ENCODE measurements at regions of chr1 and their contacts with region 1.

Region 1: GRCh38 chr1:100459358-100460114 is 78.4 kb upstream of the GPR88 start:
- DNase-seq: peak; percentile 39
- ATAC-seq: peak; percentile 86
- H3K4me3 Mint-ChIP-seq: no peak overlapping the region
- H3K27ac Mint-ChIP-seq: no peak overlapping the region
- H3K4me1 Mint-ChIP-seq: peaks cover 25% of the 10 kb centered on the region
- H3K27me3 Mint-ChIP-seq: no peaks in the 10 kb centered on the region
- CTCF ChIP-seq: no peak

Region 2: DNA sequence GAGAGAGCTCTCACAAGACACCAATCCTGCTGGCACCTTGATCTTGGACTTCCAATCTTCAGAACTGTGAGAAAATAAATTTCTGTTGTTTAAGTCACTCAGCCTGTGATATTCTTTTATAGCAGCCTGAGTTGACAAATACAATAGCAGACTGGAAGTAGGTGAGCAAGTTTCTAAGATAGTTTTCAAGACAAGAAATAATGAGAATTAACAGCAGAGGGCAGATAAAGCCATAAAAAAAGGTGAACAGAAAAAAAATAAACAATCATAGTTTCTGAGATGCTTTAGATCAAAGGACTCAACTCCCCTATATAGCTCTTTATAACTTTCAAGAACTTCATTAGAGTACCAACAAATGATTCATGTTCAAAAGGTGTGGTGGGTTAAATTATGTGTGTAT is 1574.7 kb before region 1 on chr1:
- CTCF ChIA-PET with region 1: no interaction called
- POLR2A ChIA-PET with region 1: no interaction called
- intact Hi-C with region 1: no loop called
- DNase-seq: no peak
- ATAC-seq: no peak
- H3K4me3 Mint-ChIP-seq: no peak overlapping the region
- H3K27ac Mint-ChIP-seq: no peak overlapping the region
- H3K4me1 Mint-ChIP-seq: no peaks in the 10 kb centered on the region
- H3K27me3 Mint-ChIP-seq: peaks cover 2% of the 10 kb centered on the region
- CTCF ChIP-seq: no peak

Region 3: DNA sequence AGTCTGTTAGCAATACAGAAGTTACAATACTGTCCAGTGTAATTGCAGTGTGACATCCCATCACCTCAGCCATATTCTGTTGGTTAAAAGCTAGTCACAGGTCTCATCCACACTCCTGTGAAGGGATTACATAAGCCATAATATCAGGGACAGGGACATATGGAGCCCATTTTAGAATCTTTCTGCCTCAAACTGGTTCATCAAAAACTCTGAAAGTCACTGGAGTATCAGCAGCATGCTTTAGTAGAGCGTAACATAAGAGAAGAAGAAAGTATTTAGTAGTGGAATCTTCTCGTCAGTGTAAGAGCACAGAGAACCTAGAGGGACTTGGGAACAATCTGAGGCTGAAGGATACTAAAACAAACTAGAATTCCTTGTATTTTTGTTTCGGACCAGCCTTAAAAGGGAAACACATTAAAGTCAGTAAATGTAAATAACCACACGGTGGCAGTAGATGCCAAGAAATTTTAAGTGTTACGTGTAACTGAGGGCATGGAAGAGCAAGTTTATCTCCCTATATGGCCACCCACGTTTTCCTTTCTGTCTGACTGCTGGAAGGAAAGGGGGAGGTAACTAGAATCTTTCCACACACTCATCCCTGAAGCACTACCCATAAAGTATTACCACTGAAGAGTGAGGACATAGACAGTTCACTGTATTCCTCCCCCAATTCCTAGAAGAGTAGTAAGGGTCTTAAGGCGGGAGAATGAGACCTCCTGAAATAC is 651.0 kb before region 1 on chr1:
- CTCF ChIA-PET with region 1: interaction called, 17 read pairs
- POLR2A ChIA-PET with region 1: no interaction called
- intact Hi-C with region 1: loop called (anchors 1 kb)
- DNase-seq: no peak
- ATAC-seq: peak; percentile 71
- H3K4me3 Mint-ChIP-seq: no peak overlapping the region
- H3K27ac Mint-ChIP-seq: no peak overlapping the region
- H3K4me1 Mint-ChIP-seq: peaks cover 4% of the 10 kb centered on the region
- H3K27me3 Mint-ChIP-seq: peaks cover 10% of the 10 kb centered on the region
- CTCF ChIP-seq: peak; percentile 52

Region 4: GRCh38 chr1:100132566-100133477 is 326.7 kb before region 1 on chr1 and contains the starts of genes SASS6 and TRMT13:
- CTCF ChIA-PET with region 1: interaction called, 4 read pairs
- POLR2A ChIA-PET with region 1: no interaction called
- intact Hi-C with region 1: loop called (anchors 1 kb)
- DNase-seq: peak; percentile 81
- ATAC-seq: peak; percentile 99
- H3K4me3 Mint-ChIP-seq: peak within 1 kb of the TSS; percentile 99
- H3K27ac Mint-ChIP-seq: peak within 1 kb of the TSS; percentile 94
- H3K4me1 Mint-ChIP-seq: peaks cover 35% of the 10 kb centered on the region
- H3K27me3 Mint-ChIP-seq: no peaks in the 10 kb centered on the region
- CTCF ChIP-seq: no peak
- total RNA-seq, gene SASS6: 5.5 and 5.9 TPM in 2 replicates
- total RNA-seq, gene TRMT13: 27.2 and 31.4 TPM in 2 replicates

Region 5: GRCh38 chr1:100277866-100278265 is 181.7 kb before region 1 on chr1:
- CTCF ChIA-PET with region 1: interaction called, 10 read pairs
- POLR2A ChIA-PET with region 1: no interaction called
- intact Hi-C with region 1: loop called (anchors 1 kb)
- DNase-seq: no peak
- ATAC-seq: peak; percentile 49
- H3K4me3 Mint-ChIP-seq: no peak overlapping the region
- H3K27ac Mint-ChIP-seq: no peak overlapping the region
- H3K4me1 Mint-ChIP-seq: peaks cover 2% of the 10 kb centered on the region
- H3K27me3 Mint-ChIP-seq: no peaks in the 10 kb centered on the region
- CTCF ChIP-seq: no peak

Region 6: GRCh38 chr1:100443811-100444571 is 15.5 kb before region 1 on chr1:
- CTCF ChIA-PET with region 1: interaction called, 10 read pairs
- POLR2A ChIA-PET with region 1: no interaction called
- intact Hi-C with region 1: no loop called
- DNase-seq: no peak
- ATAC-seq: peak; percentile 52
- H3K4me3 Mint-ChIP-seq: peak overlapping the region; percentile 50
- H3K27ac Mint-ChIP-seq: peak overlapping the region; percentile 62
- H3K4me1 Mint-ChIP-seq: peaks cover 34% of the 10 kb centered on the region
- H3K27me3 Mint-ChIP-seq: no peaks in the 10 kb centered on the region
- CTCF ChIP-seq: no peak

Region 7: DNA sequence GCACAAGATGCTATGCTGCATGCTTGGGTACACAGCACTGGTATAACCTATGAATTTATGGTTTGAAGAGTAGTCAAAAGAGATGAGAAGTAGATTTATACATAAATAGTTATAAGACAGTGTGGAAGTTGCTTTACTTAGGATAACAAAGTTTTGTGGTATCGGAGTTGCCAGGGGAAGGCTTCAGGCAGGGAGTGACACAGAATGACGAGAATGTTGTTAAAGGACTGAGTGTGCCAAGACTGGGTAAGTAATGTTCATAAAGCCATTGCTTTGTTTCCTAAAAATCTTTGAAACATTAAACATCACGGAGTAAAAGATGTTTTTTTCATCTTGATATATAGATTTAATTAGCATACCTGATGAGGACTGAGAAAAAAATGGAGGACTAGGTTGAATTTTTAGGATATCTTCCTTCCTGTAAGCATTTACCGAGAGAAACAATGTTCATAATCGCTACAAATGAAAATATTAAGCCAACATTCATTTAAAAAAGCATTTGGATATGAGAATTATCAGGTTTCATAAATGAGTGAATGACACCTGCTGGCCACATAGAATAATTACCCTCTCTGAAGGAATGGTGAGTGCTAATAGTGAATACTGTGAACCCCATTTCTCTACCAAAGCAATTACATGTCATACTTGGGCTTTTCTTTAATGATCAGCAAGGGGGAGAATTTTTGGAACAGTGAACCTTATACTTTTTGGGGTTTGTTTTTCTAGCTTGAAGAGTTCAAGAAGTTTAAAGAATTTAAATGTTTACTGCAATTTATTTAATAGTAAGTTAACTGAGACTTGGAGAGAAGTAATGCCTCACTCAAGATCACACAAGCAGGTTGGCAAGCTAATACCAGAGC is 406.7 kb after region 1 on chr1:
- CTCF ChIA-PET with region 1: interaction called, 18 read pairs
- POLR2A ChIA-PET with region 1: no interaction called
- intact Hi-C with region 1: loop called (anchors 1 kb)
- DNase-seq: no peak
- ATAC-seq: no peak
- H3K4me3 Mint-ChIP-seq: no peak overlapping the region
- H3K27ac Mint-ChIP-seq: no peak overlapping the region
- H3K4me1 Mint-ChIP-seq: no peaks in the 10 kb centered on the region
- H3K27me3 Mint-ChIP-seq: no peaks in the 10 kb centered on the region
- CTCF ChIP-seq: no peak

Region 8: GRCh38 chr1:101438359-101438758 is 978.8 kb after region 1 on chr1:
- CTCF ChIA-PET with region 1: no interaction called
- POLR2A ChIA-PET with region 1: no interaction called
- intact Hi-C with region 1: loop called (anchors 10 kb)
- DNase-seq: no peak
- ATAC-seq: peak; percentile 29
- H3K4me3 Mint-ChIP-seq: no peak overlapping the region
- H3K27ac Mint-ChIP-seq: no peak overlapping the region
- H3K4me1 Mint-ChIP-seq: peaks cover 42% of the 10 kb centered on the region
- H3K27me3 Mint-ChIP-seq: no peaks in the 10 kb centered on the region
- CTCF ChIP-seq: no peak